ENCODE measurements at regions of chr10 and their contacts with region 1.

Region 1: GRCh38 chr10:43683451-43684291 is 35.0 kb upstream of the ZNF32 start:
- DNase-seq: peak in 1 of 2 experiments; percentile 49
- H3K4me3 ChIP-seq: no peak overlapping the region
- H3K4me3 Mint-ChIP-seq: no peak overlapping the region
- H3K27ac Mint-ChIP-seq: no peak overlapping the region
- H3K4me1 ChIP-seq: no peaks in the 10 kb centered on the region
- H3K4me1 Mint-ChIP-seq: no peaks in the 10 kb centered on the region
- H3K27me3 ChIP-seq: no peaks in the 10 kb centered on the region; the same call in 1 of the 2 replicates
- H3K27me3 Mint-ChIP-seq: peaks cover 33% of the 10 kb centered on the region
- CTCF ChIP-seq: peak; percentile 68 to 77

Region 2: DNA sequence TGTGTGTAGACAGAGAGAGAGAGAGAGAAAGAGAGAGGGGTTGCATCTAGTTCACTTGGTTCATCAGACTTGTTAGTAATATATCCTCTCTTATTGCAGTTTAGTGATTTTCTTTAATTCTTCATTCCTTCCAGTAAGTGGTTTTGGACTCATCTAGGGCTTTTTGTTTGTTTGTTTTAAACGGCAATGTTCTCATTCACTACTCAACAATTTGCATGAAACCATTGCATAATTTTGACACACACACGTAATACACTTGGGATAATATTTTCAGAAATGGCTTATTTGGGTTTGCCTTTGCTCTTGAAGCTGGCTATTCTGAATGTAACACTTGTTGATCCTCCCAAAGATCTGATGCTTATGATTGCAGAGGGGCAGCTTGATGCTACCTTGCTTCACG is 18.6 kb before region 1 on chr10:
- CTCF ChIA-PET with region 1: no interaction called
- POLR2A ChIA-PET with region 1: no interaction called
- intact Hi-C with region 1: no loop called
- DNase-seq: no peak
- H3K4me3 ChIP-seq: no peak overlapping the region
- H3K4me3 Mint-ChIP-seq: no peak overlapping the region
- H3K27ac Mint-ChIP-seq: no peak overlapping the region
- H3K4me1 ChIP-seq: no peaks in the 10 kb centered on the region
- H3K4me1 Mint-ChIP-seq: no peaks in the 10 kb centered on the region
- H3K27me3 ChIP-seq: no peaks in the 10 kb centered on the region
- H3K27me3 Mint-ChIP-seq: peaks cover 13% of the 10 kb centered on the region
- CTCF ChIP-seq: no peak

Region 3: GRCh38 chr10:43901302-43901701 is 217.6 kb after region 1 on chr10:
- CTCF ChIA-PET with region 1: interaction called, 3 read pairs
- POLR2A ChIA-PET with region 1: no interaction called
- intact Hi-C with region 1: loop called (anchors 5 kb)
- DNase-seq: no peak
- H3K4me3 ChIP-seq: no peak overlapping the region
- H3K4me3 Mint-ChIP-seq: no peak overlapping the region
- H3K27ac Mint-ChIP-seq: no peak overlapping the region
- H3K4me1 ChIP-seq: no peaks in the 10 kb centered on the region
- H3K4me1 Mint-ChIP-seq: no peaks in the 10 kb centered on the region
- H3K27me3 ChIP-seq: no peaks in the 10 kb centered on the region
- H3K27me3 Mint-ChIP-seq: peaks cover 5% of the 10 kb centered on the region
- CTCF ChIP-seq: peak in 1 of 2 experiments; percentile 8